ENCODE measurements at regions of chr1 and their contacts with region 1.

Region 1: GRCh38 chr1:179706339-179706941 is 36.7 kb upstream of the FAM163A start:
- DNase-seq: peak; percentile 37
- ATAC-seq: peak; percentile 67
- H3K4me3 ChIP-seq: no peak overlapping the region
- H3K27ac ChIP-seq: no peak overlapping the region
- H3K4me1 ChIP-seq: no peaks in the 10 kb centered on the region
- H3K27me3 ChIP-seq: no peaks in the 10 kb centered on the region
- CTCF ChIP-seq: peak; percentile 69 to 88 (median 84)
- POLR2A ChIP-seq: no peak
- RAD21 ChIP-seq: peak; percentile 87

Region 2: GRCh38 chr1:179867807-179868330 is 161.4 kb after region 1 on chr1:
- CTCF ChIA-PET with region 1: no interaction called
- POLR2A ChIA-PET with region 1: no interaction called
- RAD21 ChIA-PET with region 1: no interaction called
- intact Hi-C with region 1: loop called (anchors 5 kb)
- DNase-seq: no peak
- ATAC-seq: peak; percentile 93
- H3K4me3 ChIP-seq: no peak overlapping the region
- H3K27ac ChIP-seq: no peak overlapping the region
- H3K4me1 ChIP-seq: no peaks in the 10 kb centered on the region
- H3K27me3 ChIP-seq: no peaks in the 10 kb centered on the region
- CTCF ChIP-seq: peak; percentile 73 to 87 (median 84)
- POLR2A ChIP-seq: no peak
- RAD21 ChIP-seq: peak; percentile 69

Region 3: GRCh38 chr1:179954493-179955297 is 248.3 kb after region 1 on chr1 and contains the start of gene CEP350:
- CTCF ChIA-PET with region 1: no interaction called
- POLR2A ChIA-PET with region 1: no interaction called
- RAD21 ChIA-PET with region 1: no interaction called
- intact Hi-C with region 1: loop called (anchors 10 kb)
- DNase-seq: peak; percentile 98
- ATAC-seq: peak; percentile 98
- H3K4me3 ChIP-seq: peak within 1 kb of the TSS; percentile 53 to 89
- H3K27ac ChIP-seq: peak within 1 kb of the TSS; percentile 79
- H3K4me1 ChIP-seq: peaks cover 8 to 20% of the 10 kb centered on the region in 2 experiments; a peak in 3 of 4 replicates
- H3K27me3 ChIP-seq: no peaks in the 10 kb centered on the region
- CTCF ChIP-seq: no peak
- POLR2A ChIP-seq: peak; percentile 11
- RAD21 ChIP-seq: no peak
- total RNA-seq, gene CEP350: 27.6 TPM

Region 4: DNA sequence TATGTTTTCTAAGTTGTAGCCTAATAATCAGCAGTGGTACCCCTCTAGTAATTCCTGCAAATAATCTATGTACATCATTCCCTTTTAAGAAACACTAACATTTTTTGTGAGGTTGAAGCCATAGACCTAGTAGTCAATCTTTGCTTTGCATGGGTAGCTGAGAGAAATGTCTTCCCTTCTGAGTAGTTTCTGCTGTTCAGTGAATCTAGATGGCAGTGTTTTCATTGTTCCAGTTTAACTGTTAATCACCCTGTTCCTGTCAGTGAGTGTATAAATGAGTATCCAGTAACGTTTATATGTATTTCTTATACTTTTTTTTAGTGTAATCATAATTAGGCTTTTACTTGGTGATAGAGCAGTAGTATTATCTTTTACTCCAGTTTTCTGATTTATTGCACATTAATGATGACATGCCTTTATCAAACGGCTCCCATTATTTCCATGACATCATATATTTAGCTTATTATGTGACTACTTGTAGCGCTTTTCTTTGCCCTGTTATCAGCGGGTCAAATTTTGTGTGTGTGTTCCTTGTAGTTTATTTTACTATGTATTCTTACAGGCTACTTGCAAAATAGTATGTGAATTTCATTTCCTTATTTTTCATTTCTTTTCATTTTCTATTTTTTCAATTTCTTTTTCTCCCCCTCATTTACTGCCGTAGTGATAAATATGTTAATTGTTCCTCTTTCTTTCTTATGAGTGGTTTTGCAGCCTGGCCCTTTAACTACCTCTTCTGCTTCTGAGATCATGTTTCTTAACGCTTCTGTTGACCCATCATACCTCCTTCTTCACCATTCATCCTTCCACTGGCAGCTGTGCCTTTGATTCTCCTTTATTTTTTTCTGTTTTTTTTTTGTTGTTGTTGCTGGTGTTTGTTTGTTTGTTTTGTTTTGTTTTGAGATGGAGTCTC is 267.0 kb after region 1 on chr1:
- CTCF ChIA-PET with region 1: no interaction called
- POLR2A ChIA-PET with region 1: no interaction called
- RAD21 ChIA-PET with region 1: no interaction called
- intact Hi-C with region 1: no loop called
- DNase-seq: no peak
- ATAC-seq: no peak
- H3K4me3 ChIP-seq: no peak overlapping the region
- H3K27ac ChIP-seq: no peak overlapping the region
- H3K4me1 ChIP-seq: no peaks in the 10 kb centered on the region
- H3K27me3 ChIP-seq: no peaks in the 10 kb centered on the region
- CTCF ChIP-seq: no peak
- POLR2A ChIP-seq: no peak
- RAD21 ChIP-seq: no peak

Region 5: DNA sequence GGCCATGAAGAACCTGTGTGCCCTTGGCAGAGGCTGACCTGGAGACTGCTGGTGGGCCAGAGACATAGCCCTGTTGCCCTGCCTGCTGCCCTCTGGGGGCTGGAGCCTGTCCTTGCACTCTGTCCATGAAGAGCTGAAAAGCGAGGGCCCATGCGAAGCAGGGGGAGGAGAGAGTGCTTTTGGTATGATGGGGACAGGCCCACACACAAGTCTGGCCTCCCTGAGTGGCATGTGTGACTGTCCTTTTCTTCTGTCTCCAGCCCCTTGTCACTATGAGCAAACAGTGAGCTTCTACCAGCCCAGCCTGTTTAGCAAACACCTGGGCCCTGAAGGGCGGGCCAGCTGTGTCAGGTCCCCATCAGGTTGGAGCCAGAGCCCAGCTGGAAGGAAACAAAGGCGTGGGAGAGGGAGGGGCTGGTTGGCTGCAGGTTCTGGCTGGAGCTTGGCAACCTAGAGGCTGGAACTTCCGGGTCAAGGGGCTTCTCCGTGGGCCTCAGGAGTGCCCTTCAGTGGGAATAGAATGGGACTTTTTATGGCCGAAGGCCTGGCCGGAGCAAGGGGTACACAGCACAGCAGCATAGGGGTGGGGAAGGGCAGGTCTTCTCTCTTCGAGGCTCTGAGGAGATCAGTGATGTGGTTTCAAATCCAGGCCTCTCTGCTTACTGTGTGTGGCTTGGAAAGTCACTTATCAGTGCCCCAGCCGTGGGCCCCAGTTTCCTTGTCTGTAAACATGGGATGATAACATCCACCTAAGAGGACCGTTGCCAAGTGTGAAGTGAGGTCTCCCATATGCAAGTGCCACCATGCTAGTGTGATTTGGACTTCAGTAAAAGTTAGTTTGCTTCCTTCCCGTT is 462.6 kb after region 1 on chr1:
- CTCF ChIA-PET with region 1: interaction called, 17 read pairs
- POLR2A ChIA-PET with region 1: interaction called, 3 read pairs
- RAD21 ChIA-PET with region 1: no interaction called
- intact Hi-C with region 1: loop called (anchors 1 kb)
- DNase-seq: no peak
- ATAC-seq: peak; percentile 71
- H3K4me3 ChIP-seq: no peak overlapping the region
- H3K27ac ChIP-seq: peak overlapping the region; percentile 70
- H3K4me1 ChIP-seq: peaks cover 29 to 46% of the 10 kb centered on the region in 2 experiments
- H3K27me3 ChIP-seq: no peaks in the 10 kb centered on the region
- CTCF ChIP-seq: peak; percentile 28 to 88 (median 71); a peak in 5 of 6 replicates
- POLR2A ChIP-seq: no peak
- RAD21 ChIP-seq: peak; percentile 64

Region 6: DNA sequence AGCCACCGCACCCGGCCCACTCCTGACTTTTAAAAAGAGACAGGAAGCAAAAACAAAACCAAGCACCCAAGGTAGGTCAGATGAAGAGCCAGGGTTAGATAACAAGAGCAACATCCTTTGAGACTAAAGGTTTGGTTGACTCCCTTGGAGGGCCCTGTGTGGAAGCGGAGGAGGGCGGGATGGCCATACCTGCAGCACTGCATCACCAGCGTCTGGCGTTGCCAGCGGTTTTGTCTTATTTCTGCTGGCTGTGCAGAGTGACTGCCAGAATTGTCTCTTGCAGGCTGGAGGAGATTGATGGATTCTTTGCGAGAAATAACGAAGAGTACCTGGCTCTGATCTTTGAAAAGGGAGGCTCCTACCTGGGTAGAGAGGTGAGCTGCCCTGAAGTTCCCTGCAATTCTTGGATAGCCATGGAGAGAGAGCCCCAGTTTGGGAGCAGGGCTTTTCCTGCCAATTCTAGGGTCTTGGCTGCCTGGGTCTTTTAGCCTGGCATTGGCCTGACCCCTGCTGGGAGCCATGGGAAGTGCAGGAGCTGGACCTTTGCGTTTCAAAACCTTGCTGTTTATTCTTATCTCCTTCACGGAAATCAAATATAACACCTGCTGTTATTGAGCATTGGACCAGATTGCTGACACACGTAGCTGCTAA is 472.2 kb after region 1 on chr1:
- CTCF ChIA-PET with region 1: interaction called, 30 read pairs
- POLR2A ChIA-PET with region 1: interaction called, 3 read pairs
- RAD21 ChIA-PET with region 1: interaction called in 1 of 2 experiments, 5 read pairs
- intact Hi-C with region 1: loop called (anchors 1 kb)
- DNase-seq: peak; percentile 3
- ATAC-seq: peak; percentile 67
- H3K4me3 ChIP-seq: no peak overlapping the region
- H3K27ac ChIP-seq: no peak overlapping the region
- H3K4me1 ChIP-seq: no peaks in the 10 kb centered on the region
- H3K27me3 ChIP-seq: no peaks in the 10 kb centered on the region
- CTCF ChIP-seq: peak; percentile 57 to 96 (median 95); a peak in 5 of 6 replicates
- POLR2A ChIP-seq: no peak
- RAD21 ChIP-seq: peak; percentile 90

Region 7: GRCh38 chr1:180482425-180483275 is 776.2 kb after region 1 on chr1:
- CTCF ChIA-PET with region 1: interaction called, 3 read pairs
- POLR2A ChIA-PET with region 1: no interaction called
- RAD21 ChIA-PET with region 1: no interaction called
- intact Hi-C with region 1: loop called (anchors 5 kb)
- DNase-seq: no peak
- ATAC-seq: peak; percentile 55
- H3K4me3 ChIP-seq: no peak overlapping the region
- H3K27ac ChIP-seq: no peak overlapping the region
- H3K4me1 ChIP-seq: 0 out of 4 replicates have a peak, but pooled peaks cover 0 to 4% of the 10 kb centered on the region in 2 experiments
- H3K27me3 ChIP-seq: no peaks in the 10 kb centered on the region
- CTCF ChIP-seq: peak; percentile 41 to 76 (median 65); a peak in 5 of 6 replicates
- POLR2A ChIP-seq: no peak
- RAD21 ChIP-seq: peak; percentile 45

Measured in HCT116 (cell line).